ENCODE measurements at regions of chr6 and their contacts with region 1.

Region 1: DNA sequence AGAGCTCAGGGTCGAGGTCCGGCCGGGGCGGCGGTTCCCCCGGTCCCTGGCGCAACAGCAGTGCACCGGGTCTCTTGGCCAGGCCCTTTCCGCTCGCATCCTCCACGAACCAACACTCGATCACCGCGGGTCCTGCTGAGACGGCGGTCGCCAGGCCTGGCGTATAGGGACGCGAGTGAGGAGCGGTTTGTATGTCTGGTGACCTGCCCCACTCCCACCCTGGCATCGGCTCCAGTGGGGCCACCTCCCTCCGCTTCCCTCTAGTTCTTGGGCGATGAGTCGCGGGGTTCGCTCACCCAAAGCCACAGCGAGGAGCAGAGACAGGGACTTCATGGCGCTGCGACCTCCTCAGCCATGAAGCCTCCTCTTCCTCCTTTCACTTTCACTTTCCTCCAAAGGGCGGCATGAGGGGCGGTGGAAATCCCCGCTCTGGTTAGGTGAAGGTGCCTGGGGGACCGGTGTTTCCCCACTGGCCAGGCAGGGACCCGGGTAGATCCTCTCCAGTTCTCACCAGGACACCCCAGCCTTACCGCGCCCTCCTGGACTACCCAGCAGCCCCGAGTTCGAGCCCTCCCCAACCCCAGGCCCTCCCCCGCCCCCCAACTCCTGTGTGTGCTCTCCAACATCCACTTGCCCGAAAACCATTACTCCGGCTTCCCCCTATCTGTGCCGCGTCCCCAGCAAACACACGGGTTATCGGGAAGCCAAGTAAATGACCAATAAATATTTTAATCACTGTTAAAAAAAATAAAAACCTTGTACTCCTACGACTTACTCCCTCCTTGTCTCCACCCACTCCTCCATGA is at the start of gene TAPBP:
- DNase-seq: peak; percentile 59 to 81 (median 81)
- ATAC-seq: peak; percentile 8 to 21
- H3K4me3 ChIP-seq: peak within 1 kb of the TSS; percentile 84
- H3K27ac ChIP-seq: peak within 1 kb of the TSS; percentile 96
- H3K4me1 ChIP-seq: peaks cover 12% of the 10 kb centered on the region
- H3K27me3 ChIP-seq: no peaks in the 10 kb centered on the region
- total RNA-seq, gene TAPBP: 85.1 to 91.6 (median 87.2) TPM

Region 2: DNA sequence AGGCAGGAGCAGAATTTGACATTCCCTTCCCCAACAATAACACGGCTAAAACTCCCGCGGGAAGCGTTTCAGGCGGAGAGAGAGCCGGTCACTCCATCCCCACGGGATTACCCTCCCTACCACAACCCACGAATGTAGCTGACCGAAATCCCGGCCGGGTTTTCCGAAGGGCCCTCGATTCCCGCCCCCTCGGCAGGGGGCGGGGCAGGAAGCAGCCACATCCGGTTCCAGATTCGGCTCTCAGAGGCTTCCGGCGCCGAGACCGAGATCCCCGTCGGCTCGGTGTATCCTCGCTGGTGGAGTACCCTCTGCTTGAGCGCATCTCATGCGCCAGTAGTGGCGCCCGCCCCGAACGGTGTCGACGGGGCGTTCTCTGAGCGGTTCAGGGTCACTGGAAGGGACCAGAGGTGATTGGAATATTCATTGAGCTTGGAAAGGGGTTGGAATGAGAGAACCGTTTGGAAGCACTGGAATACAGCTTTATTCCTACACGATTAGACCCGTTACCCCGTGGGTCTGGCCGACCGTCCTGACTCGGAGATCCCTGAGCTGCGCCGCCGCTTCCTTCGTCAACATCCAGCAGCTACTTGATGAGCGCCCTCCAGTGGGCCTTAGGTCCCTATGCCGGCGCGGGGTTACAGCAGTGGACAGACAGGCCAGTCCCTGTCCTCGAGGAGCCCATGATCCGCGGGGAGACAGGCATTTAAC is 14.5 kb before region 1 on chr6:
- intact Hi-C with region 1: loop called in 1 of 4 experiments (anchors 2 kb)
- DNase-seq: peak; percentile 93 to 96 (median 96)
- ATAC-seq: peak; percentile 76 to 80
- H3K4me3 ChIP-seq: peak overlapping the region; percentile 68
- H3K27ac ChIP-seq: peak overlapping the region; percentile 95
- H3K4me1 ChIP-seq: no peaks in the 10 kb centered on the region
- H3K27me3 ChIP-seq: no peaks in the 10 kb centered on the region

Region 3: DNA sequence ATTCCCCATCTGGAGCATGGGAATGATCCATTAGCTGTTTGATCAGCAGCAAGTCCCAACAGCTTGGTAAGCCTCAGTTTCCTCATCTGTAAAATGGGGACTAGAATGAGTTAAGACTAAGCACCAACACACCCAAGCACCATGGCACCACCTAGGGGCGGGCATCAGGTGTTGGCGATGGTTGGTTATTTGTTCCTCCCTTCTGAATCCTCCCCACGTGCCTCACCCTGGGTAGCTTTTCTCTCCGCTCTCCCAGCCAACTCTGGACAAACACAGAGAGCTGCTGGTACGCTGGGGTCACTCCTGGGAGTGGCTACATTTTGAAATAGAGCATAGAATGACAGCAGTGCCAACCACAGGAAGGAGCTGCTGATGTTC is 293.9 kb after region 1 on chr6:
- intact Hi-C with region 1: no loop called
- DNase-seq: no peak
- ATAC-seq: no peak
- H3K4me3 ChIP-seq: no peak overlapping the region
- H3K27ac ChIP-seq: no peak overlapping the region
- H3K4me1 ChIP-seq: peaks cover 10% of the 10 kb centered on the region
- H3K27me3 ChIP-seq: no peaks in the 10 kb centered on the region